ENCODE measurements at regions of chr12 and their contacts with region 1.

Region 1: DNA sequence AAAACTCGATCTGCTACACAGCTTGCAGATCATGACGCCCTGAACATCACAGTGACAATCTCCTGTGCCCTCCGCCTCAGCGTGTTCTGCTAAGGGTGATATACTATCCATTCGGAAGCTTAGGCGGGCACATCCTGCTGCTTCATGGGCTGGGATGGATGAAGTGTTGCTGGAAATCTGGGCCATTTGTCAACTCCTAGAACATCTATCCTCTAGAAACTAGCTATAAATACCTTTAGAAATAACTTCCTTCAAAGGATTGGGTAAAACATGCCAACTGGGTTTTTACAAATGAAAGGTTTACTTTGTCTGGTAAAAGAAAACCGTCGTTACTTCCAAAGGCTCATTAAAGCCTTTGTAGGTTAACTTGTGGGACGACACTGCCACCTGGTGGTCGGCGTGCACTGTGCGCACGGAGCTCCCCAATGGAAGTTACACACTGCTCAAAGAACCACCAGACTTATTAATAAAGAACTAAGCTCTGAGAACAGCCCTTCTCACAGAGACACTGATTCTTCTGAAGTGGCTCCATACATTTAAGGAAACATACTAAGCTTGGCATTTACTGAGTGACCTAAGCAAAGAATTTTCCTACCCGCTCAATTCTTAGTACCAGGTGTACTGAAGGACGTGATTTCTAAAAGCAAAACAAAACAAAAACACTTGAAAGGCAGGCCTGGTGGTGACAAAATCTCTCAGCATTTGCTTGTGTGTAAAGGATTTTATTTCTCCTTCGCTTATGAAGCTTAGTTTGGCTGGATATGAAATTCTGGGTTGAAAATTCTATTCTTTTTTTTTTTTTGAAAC is 21.6 kb upstream of the CACNA2D4 start:
- DNase-seq: peak; percentile 84 to 87 (median 84)
- ATAC-seq: peak; percentile 80 to 93 (median 85)
- H3K4me3 ChIP-seq: no peak overlapping the region
- H3K27ac ChIP-seq: no peak overlapping the region
- H3K4me1 ChIP-seq: peaks cover 0 to 10% (median 4%) of the 10 kb centered on the region in 4 donors
- H3K27me3 ChIP-seq: no peaks in the 10 kb centered on the region
- CTCF ChIP-seq: peak; percentile 93 to 99 (median 97)
- POLR2A ChIP-seq: no peak

Region 2: GRCh38 chr12:1644534-1645438 is 295.2 kb before region 1 on chr12:
- intact Hi-C with region 1: loop called (anchors 10 kb)
- DNase-seq: peak in 2 of 3 donors; percentile 55 to 64
- ATAC-seq: peak; percentile 24 to 69 (median 68)
- H3K4me3 ChIP-seq: no peak overlapping the region
- H3K27ac ChIP-seq: no peak overlapping the region
- H3K4me1 ChIP-seq: no peaks in the 10 kb centered on the region
- H3K27me3 ChIP-seq: no peaks in the 10 kb centered on the region
- CTCF ChIP-seq: no peak
- POLR2A ChIP-seq: no peak

Measured in right lobe of liver (tissue), 6 donors.